Activated CD4-positive, alpha-beta memory T cell treated with anti-CD3 and anti-CD28 coated beads, Interleukin-2, amount 10 ng/mL, durations not matched to agents 7 days and 5 days (primary cell): ENCODE measurements at regions of chr9 and their contacts with region 1.

Region 1: DNA sequence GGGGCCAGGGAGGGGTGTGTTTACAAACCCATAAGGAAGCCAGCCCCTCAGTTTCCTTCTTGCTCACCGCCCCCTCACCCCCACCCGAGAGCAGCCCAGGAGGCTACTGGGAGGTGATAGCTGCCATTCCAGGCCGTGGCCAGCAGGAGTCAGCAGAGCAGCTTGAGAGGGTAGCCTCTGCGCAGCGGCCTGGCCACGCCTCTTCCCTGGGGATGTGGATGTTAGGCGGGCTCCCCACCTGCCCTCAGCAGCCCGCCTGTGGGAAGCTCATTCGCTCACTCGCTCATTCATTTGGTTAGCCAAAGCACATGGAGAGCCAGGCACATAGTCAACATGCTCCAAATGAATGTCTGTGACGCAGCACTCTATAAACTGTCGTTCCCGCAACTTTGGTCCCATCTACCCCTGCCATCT is 6.1 kb upstream of the DPM2 start:
- DNase-seq: peak; percentile 80
- H3K4me3 Mint-ChIP-seq: no peak overlapping the region
- H3K27ac Mint-ChIP-seq: peak overlapping the region; percentile 59
- H3K4me1 Mint-ChIP-seq: peaks cover 19% of the 10 kb centered on the region
- H3K27me3 Mint-ChIP-seq: no peaks in the 10 kb centered on the region

Region 2: DNA sequence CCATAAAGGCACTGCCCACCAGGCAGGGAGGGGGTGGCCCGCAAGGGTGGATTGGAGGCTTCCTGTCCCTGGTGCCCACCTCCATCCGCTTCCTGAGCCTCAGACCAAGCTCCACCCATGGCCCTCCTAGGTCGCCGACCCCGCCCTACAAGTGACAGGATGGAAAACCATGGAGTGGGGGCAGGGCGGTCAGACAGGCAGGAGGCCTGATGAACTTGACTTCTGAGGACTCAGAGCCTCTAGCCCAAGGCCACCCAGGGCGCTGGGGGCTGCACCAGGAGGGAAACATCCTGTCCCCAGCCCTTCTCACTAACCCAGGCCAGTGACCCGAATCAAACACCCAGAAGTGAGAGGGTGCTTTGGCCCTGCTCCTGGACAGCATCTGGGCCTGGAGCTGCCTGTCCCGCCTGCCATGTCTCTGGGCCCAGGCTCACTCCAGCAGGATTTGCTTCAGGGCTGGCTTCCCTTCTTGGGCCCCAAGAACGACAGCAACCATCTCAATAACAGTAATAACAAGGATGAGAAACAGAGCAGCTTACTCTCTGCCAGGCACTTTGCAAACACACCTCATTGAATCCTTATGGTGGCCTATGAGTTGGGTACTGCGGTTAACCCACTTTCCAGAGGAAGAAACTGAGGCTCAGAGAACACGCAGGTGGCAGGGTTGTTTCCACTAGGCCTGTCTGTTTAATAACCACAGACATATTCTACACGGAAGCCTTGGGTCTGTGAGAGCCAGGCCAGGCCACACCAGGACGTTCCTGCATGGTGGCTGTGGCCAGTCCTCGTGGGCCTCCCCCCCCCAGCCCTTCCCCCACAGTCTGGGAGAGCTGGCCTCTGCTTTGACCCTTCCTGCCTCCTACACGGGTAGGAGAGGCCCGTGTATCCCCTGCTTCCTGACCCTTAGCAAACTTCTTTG is 39.9 kb before region 1 on chr9:
- CTCF ChIA-PET with region 1: no interaction called
- POLR2A ChIA-PET with region 1: no interaction called
- DNase-seq: peak; percentile 90
- H3K4me3 Mint-ChIP-seq: peak overlapping the region; percentile 95
- H3K27ac Mint-ChIP-seq: peak overlapping the region; percentile 100
- H3K4me1 Mint-ChIP-seq: peaks cover 49% of the 10 kb centered on the region
- H3K27me3 Mint-ChIP-seq: no peaks in the 10 kb centered on the region

Region 3: GRCh38 chr9:127930231-127931091 is 13.3 kb before region 1 on chr9 and contains the start of gene PIP5KL1:
- CTCF ChIA-PET with region 1: interaction called, 16 read pairs
- POLR2A ChIA-PET with region 1: interaction called, 7 read pairs
- DNase-seq: peak; percentile 78
- H3K4me3 Mint-ChIP-seq: peak within 1 kb of the TSS; percentile 65
- H3K27ac Mint-ChIP-seq: no peak within 1 kb of the TSS
- H3K4me1 Mint-ChIP-seq: peaks cover 61% of the 10 kb centered on the region
- H3K27me3 Mint-ChIP-seq: peaks cover 15% of the 10 kb centered on the region
- total RNA-seq, gene PIP5KL1: 1.5 to 1.9 TPM

Region 4: GRCh38 chr9:127955294-127956035 is 11.7 kb after region 1 on chr9:
- CTCF ChIA-PET with region 1: interaction called, 56 read pairs
- POLR2A ChIA-PET with region 1: interaction called, 9 read pairs
- DNase-seq: peak; percentile 81
- H3K4me3 Mint-ChIP-seq: peak overlapping the region; percentile 31
- H3K27ac Mint-ChIP-seq: peak overlapping the region; percentile 66
- H3K4me1 Mint-ChIP-seq: peaks cover 72% of the 10 kb centered on the region
- H3K27me3 Mint-ChIP-seq: no peaks in the 10 kb centered on the region

Region 5: GRCh38 chr9:127980706-127981558 is 37.2 kb after region 1 on chr9 and contains the start of gene EEIG1:
- CTCF ChIA-PET with region 1: interaction called, 17 read pairs
- POLR2A ChIA-PET with region 1: interaction called, 4 read pairs
- DNase-seq: peak; percentile 96
- H3K4me3 Mint-ChIP-seq: peak within 1 kb of the TSS; percentile 91
- H3K27ac Mint-ChIP-seq: peak within 1 kb of the TSS; percentile 81
- H3K4me1 Mint-ChIP-seq: peaks cover 44% of the 10 kb centered on the region
- H3K27me3 Mint-ChIP-seq: no peaks in the 10 kb centered on the region
- total RNA-seq, gene EEIG1: 212 to 218 TPM

Region 6: GRCh38 chr9:128026773-128027541 is 83.2 kb after region 1 on chr9:
- CTCF ChIA-PET with region 1: interaction called, 19 read pairs
- POLR2A ChIA-PET with region 1: interaction called, 4 read pairs
- DNase-seq: peak; percentile 55
- H3K4me3 Mint-ChIP-seq: peak overlapping the region; percentile 73
- H3K27ac Mint-ChIP-seq: peak overlapping the region; percentile 99
- H3K4me1 Mint-ChIP-seq: peaks cover 93% of the 10 kb centered on the region
- H3K27me3 Mint-ChIP-seq: no peaks in the 10 kb centered on the region

Region 7: DNA sequence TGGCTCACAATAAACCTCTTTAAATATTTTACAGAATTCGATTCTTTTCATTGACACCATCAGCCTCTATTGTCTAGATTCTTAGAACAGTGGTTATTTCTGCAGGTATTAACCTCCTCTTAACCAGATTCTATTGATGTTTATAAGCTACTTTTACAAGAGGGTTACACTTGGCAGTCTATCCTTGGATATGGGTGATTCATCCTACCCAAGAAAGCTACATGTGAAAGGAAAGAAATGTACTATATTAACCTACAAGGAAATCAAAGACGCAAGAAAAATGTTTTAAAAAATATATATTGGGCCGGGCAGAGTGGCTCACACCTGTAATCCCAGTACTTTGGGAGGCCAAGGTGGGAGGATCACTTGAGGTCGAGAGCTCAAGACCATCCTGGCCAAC is 141.0 kb after region 1 on chr9:
- CTCF ChIA-PET with region 1: interaction called, 19 read pairs
- POLR2A ChIA-PET with region 1: no interaction called
- DNase-seq: no peak
- H3K4me3 Mint-ChIP-seq: no peak overlapping the region
- H3K27ac Mint-ChIP-seq: no peak overlapping the region
- H3K4me1 Mint-ChIP-seq: peaks cover 43% of the 10 kb centered on the region
- H3K27me3 Mint-ChIP-seq: no peaks in the 10 kb centered on the region